ENCODE measurements at regions of chr13 and their contacts with region 1.

Region 1: GRCh38 chr13:53873558-53873957 is 844.9 kb downstream of the OLFM4 start:
- DNase-seq: no peak

Region 2: DNA sequence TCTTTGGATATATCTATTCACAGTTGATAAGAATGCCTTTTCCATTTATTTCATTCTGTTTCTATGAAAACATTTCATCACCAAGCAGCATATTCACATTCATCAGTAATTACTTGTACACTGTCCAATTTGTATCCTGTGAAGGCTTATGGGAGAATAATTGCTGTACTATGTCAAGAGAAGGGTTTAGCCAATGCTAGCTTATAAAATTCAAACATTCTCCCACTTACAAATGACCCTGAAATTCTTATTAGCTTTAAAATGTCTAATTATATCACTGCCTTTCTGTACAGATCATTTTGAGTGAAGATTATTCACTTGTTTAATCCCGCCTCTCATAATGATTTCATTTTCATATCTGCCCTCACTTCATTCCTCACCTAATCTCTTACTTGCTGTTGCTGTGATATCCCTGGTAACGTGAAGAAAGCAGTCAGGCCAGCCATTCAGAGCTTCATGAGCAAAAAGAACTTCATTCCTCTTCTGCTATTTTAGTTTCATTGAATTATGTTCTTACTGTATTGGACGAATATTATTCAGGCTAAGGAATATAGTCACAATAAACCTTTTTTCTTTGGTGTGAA is 66.2 kb before region 1 on chr13:
- intact Hi-C with region 1: loop called in 1 of 2 experiments (anchors 2 kb)
- DNase-seq: no peak

Measured in posterior vena cava (tissue), 2 donors.